Activated CD8-positive, alpha-beta memory T cell treated with anti-CD3 and anti-CD28 coated beads, Interleukin-2, amount 10 ng/mL, durations not matched to agents 7 days and 5 days (primary cell): ENCODE measurements at regions of chr12 and their contacts with region 1.

Region 1: GRCh38 chr12:50504798-50505385 is at the start of gene DIP2B:
- DNase-seq: peak; percentile 96
- ATAC-seq: peak; percentile 92
- H3K4me3 Mint-ChIP-seq: peak within 1 kb of the TSS; percentile 85
- H3K27ac Mint-ChIP-seq: peak within 1 kb of the TSS; percentile 92
- H3K4me1 Mint-ChIP-seq: peaks cover 46% of the 10 kb centered on the region
- H3K27me3 Mint-ChIP-seq: no peaks in the 10 kb centered on the region
- total RNA-seq, gene DIP2B: 14.7 to 14.8 TPM

Region 2: GRCh38 chr12:50365709-50366406 is 139.0 kb before region 1 on chr12:
- CTCF ChIA-PET with region 1: no interaction called
- DNase-seq: no peak
- ATAC-seq: no peak
- H3K4me3 Mint-ChIP-seq: no peak overlapping the region
- H3K27ac Mint-ChIP-seq: no peak overlapping the region
- H3K4me1 Mint-ChIP-seq: no peaks in the 10 kb centered on the region
- H3K27me3 Mint-ChIP-seq: peaks cover 1% of the 10 kb centered on the region

Region 3: GRCh38 chr12:50411051-50411660 is 93.7 kb before region 1 on chr12:
- CTCF ChIA-PET with region 1: no interaction called
- DNase-seq: no peak
- ATAC-seq: no peak
- H3K4me3 Mint-ChIP-seq: no peak overlapping the region
- H3K27ac Mint-ChIP-seq: no peak overlapping the region
- H3K4me1 Mint-ChIP-seq: peaks cover 7% of the 10 kb centered on the region
- H3K27me3 Mint-ChIP-seq: no peaks in the 10 kb centered on the region

Region 4: DNA sequence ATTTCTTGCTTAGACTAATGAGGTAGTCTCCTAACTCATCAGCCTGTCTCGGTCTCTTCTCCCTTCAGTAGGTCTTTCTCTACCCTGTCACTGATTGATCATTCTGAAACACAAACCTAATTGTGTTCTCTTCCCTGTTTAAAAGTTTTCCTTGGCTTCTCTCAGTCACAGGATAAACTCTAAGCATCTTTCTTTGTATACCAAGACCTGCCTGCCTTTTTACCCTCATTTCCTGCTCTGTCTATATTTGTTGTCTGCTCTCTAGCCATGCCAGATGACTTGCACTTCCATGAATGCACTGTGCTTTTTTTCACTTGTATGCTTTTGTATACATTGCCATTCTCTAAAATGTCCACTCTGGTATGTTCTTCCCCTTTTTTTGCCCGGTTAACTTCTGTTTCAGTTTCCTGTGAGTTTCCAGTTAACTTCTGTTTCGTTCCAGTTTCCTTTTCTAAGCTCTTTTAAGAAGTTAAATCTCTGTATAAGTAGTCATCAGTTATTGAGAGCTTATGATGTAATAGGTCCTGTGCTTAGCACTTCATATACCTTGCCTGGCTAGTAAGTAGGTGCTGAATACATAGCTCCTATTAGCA is 12.7 kb after region 1 on chr12:
- CTCF ChIA-PET with region 1: interaction called, 34 read pairs
- DNase-seq: no peak
- ATAC-seq: peak; percentile 74
- H3K4me3 Mint-ChIP-seq: no peak overlapping the region
- H3K27ac Mint-ChIP-seq: no peak overlapping the region
- H3K4me1 Mint-ChIP-seq: peaks cover 32% of the 10 kb centered on the region
- H3K27me3 Mint-ChIP-seq: no peaks in the 10 kb centered on the region

Region 5: GRCh38 chr12:50537538-50537919 is 32.6 kb after region 1 on chr12:
- CTCF ChIA-PET with region 1: interaction called, 13 read pairs
- DNase-seq: no peak
- ATAC-seq: no peak
- H3K4me3 Mint-ChIP-seq: no peak overlapping the region
- H3K27ac Mint-ChIP-seq: no peak overlapping the region
- H3K4me1 Mint-ChIP-seq: peaks cover 20% of the 10 kb centered on the region
- H3K27me3 Mint-ChIP-seq: no peaks in the 10 kb centered on the region

Region 6: DNA sequence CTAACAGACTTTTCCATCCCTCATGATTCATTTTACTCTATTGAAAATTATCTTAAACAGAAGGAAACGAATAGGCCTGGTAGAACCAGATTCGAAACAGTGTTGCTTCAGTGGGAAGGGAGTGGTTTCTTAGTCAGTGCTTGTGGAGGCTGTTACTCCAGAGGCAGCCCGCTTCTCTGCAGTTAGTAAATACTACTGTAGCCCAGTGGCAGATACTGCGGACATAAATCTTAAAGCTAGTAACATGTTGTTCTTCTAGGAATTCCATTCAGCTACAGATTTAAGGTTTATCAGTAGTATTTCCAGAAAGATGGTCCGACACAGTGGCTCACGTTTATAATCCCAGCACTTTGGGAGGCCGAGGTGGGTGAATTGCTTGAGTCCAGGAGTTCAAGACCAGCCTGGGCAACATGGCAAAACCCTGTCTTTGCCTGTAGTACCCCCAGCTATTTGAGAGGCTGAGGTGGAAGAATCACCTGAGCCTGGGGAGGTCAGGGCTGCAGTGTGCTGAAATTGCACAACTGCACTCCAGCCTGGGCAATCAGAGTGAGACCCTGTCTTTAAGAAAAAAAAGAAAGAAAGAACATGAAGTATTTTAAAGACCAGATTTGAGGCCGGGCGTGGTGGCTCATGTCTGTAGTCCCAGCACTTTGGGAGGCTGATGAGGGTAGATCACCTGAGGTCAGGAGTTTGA is 45.8 kb after region 1 on chr12:
- CTCF ChIA-PET with region 1: interaction called, 13 read pairs
- DNase-seq: no peak
- ATAC-seq: no peak
- H3K4me3 Mint-ChIP-seq: no peak overlapping the region
- H3K27ac Mint-ChIP-seq: no peak overlapping the region
- H3K4me1 Mint-ChIP-seq: peaks cover 10% of the 10 kb centered on the region
- H3K27me3 Mint-ChIP-seq: no peaks in the 10 kb centered on the region

Region 7: GRCh38 chr12:50637870-50638481 is 133.1 kb after region 1 on chr12:
- CTCF ChIA-PET with region 1: interaction called, 135 read pairs
- DNase-seq: no peak
- ATAC-seq: peak; percentile 51
- H3K4me3 Mint-ChIP-seq: no peak overlapping the region
- H3K27ac Mint-ChIP-seq: no peak overlapping the region
- H3K4me1 Mint-ChIP-seq: peaks cover 20% of the 10 kb centered on the region
- H3K27me3 Mint-ChIP-seq: no peaks in the 10 kb centered on the region